ENCODE measurements at regions of chr11 and their contacts with region 1.

Region 1: GRCh38 chr11:64144587-64145472 is 21.1 kb downstream of the MACROD1 start:
- DNase-seq: no peak
- ATAC-seq: no peak
- H3K4me3 Mint-ChIP-seq: no peak overlapping the region
- H3K27ac Mint-ChIP-seq: no peak overlapping the region
- H3K4me1 Mint-ChIP-seq: peaks cover 9 to 23% (median 17%) of the 10 kb centered on the region in 4 donors
- H3K27me3 Mint-ChIP-seq: no peaks in the 10 kb centered on the region

Region 2: GRCh38 chr11:63938479-63939396 is 206.1 kb before region 1 on chr11 and contains the start of gene NAA40:
- POLR2A ChIA-PET with region 1: interaction called, 14 read pairs
- DNase-seq: peak; percentile 84 to 95 (median 89)
- ATAC-seq: peak; percentile 86 to 91
- H3K4me3 Mint-ChIP-seq: peak within 1 kb of the TSS; percentile 85 to 97 (median 96)
- H3K27ac Mint-ChIP-seq: peak within 1 kb of the TSS; percentile 79 to 95 (median 93)
- H3K4me1 Mint-ChIP-seq: peaks cover 9 to 41% (median 29%) of the 10 kb centered on the region in 4 donors
- H3K27me3 Mint-ChIP-seq: no peaks in the 10 kb centered on the region
- polyA plus RNA-seq, gene NAA40: 6.2 to 14.6 (median 11.7) TPM

Region 3: GRCh38 chr11:64102005-64102738 is 42.7 kb before region 1 on chr11:
- POLR2A ChIA-PET with region 1: no interaction called
- DNase-seq: no peak
- ATAC-seq: no peak
- H3K4me3 Mint-ChIP-seq: no peak overlapping the region
- H3K27ac Mint-ChIP-seq: no peak overlapping the region
- H3K4me1 Mint-ChIP-seq: peaks cover 0 to 4% (median 0%) of the 10 kb centered on the region in 4 donors
- H3K27me3 Mint-ChIP-seq: no peaks in the 10 kb centered on the region

Measured in naive thymus-derived CD8-positive, alpha-beta T cell (primary cell).